ENCODE measurements at regions of chr4 and their contacts with region 1.

Region 1: DNA sequence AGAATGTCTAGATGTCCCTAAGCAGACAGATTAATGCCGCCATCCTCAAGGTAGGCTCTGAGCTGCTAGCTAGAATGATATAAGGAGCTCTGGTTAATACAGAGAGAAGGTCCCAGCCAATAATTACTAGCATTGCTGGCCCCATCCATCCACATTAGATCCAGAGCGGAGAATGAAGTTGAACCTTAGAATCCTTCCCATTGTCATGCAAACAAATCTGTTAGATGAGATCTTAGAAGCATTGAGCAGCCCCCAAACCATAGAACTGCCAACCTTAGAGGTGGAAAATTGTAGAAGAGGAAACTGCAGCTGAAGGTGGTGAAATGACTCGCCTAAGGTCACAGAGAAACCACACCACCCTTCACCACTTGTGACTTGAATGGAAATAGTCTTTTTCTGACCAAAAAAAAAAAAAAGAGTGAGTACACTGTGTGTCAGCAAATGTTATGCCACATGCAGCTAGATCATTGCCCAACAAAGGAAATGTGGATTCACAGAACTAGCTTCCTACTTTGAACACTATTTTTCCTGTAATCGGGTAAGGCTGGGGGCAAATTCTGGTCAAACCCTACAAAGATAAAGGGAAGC is 162.1 kb downstream of the SMIM20 start:
- DNase-seq: peak; percentile 76
- H3K4me3 Mint-ChIP-seq: peak overlapping the region; percentile 25
- H3K27ac Mint-ChIP-seq: peak overlapping the region; percentile 83
- H3K4me1 Mint-ChIP-seq: peaks cover 76% of the 10 kb centered on the region
- H3K27me3 Mint-ChIP-seq: no peaks in the 10 kb centered on the region

Region 2: GRCh38 chr4:26088433-26088928 is 12.4 kb after region 1 on chr4:
- CTCF ChIA-PET with region 1: interaction called, 4 read pairs
- POLR2A ChIA-PET with region 1: interaction called, 41 read pairs
- DNase-seq: no peak
- H3K4me3 Mint-ChIP-seq: peak overlapping the region; percentile 41
- H3K27ac Mint-ChIP-seq: peak overlapping the region; percentile 78
- H3K4me1 Mint-ChIP-seq: peaks cover 64% of the 10 kb centered on the region
- H3K27me3 Mint-ChIP-seq: no peaks in the 10 kb centered on the region

Region 3: GRCh38 chr4:26105815-26106699 is 30.0 kb after region 1 on chr4:
- CTCF ChIA-PET with region 1: no interaction called
- POLR2A ChIA-PET with region 1: interaction called, 14 read pairs
- DNase-seq: no peak
- H3K4me3 Mint-ChIP-seq: no peak overlapping the region
- H3K27ac Mint-ChIP-seq: no peak overlapping the region
- H3K4me1 Mint-ChIP-seq: peaks cover 33% of the 10 kb centered on the region
- H3K27me3 Mint-ChIP-seq: no peaks in the 10 kb centered on the region

Region 4: GRCh38 chr4:26130173-26130572 is 54.1 kb after region 1 on chr4:
- CTCF ChIA-PET with region 1: interaction called, 3 read pairs
- POLR2A ChIA-PET with region 1: interaction called, 24 read pairs
- DNase-seq: peak; percentile 45
- H3K4me3 Mint-ChIP-seq: no peak overlapping the region
- H3K27ac Mint-ChIP-seq: peak overlapping the region; percentile 79
- H3K4me1 Mint-ChIP-seq: peaks cover 72% of the 10 kb centered on the region
- H3K27me3 Mint-ChIP-seq: no peaks in the 10 kb centered on the region

Region 5: DNA sequence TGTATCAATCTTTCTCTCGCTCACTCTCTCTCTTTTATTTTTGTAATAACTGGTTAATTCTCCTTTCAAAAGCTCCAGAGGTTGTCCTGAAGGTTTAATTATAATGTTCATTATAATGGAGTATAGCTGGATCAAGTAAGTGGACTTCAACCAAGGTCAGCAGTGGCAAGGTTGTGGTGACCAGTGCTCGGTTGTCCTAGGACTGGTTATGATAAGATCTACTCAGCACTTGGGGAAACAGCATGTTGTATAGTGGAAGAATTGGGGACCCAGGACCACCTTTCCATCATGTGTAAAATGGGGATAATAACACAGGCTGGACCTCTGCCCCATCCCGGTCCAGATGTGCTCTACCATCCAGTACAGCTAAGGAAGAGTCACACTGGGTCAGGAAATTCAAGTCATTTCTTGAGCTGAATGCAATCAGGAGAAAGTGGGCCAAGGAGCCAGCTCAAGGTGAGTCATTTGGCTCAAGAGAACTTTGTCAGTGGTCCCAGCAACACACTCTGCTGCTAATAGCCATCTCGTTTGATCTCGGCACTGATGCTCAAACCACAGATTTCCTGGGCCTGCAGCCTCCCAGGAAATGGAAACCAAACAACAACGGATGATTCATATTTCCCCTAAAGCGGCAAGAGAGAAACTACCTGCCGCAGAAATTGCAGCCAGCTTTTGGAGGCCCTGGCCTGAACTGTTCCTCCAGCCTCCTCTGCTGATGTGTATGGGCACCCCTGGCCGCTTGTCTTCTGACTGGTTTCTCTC is 121.1 kb after region 1 on chr4:
- CTCF ChIA-PET with region 1: no interaction called
- POLR2A ChIA-PET with region 1: interaction called, 41 read pairs
- DNase-seq: peak; percentile 87
- H3K4me3 Mint-ChIP-seq: peak overlapping the region; percentile 62
- H3K27ac Mint-ChIP-seq: peak overlapping the region; percentile 91
- H3K4me1 Mint-ChIP-seq: peaks cover 69% of the 10 kb centered on the region
- H3K27me3 Mint-ChIP-seq: peaks cover 23% of the 10 kb centered on the region